ENCODE measurements at regions of chr19 and their contacts with region 1.

Region 1: GRCh38 chr19:11697284-11697855 is 41.4 kb downstream of the ZNF823 start:
- DNase-seq: no peak
- H3K4me3 ChIP-seq: no peak overlapping the region
- H3K27ac ChIP-seq: no peak overlapping the region
- H3K4me1 ChIP-seq: peaks cover 3 to 9% of the 10 kb centered on the region in 2 donors
- H3K27me3 ChIP-seq: no peaks in the 10 kb centered on the region
- CTCF ChIP-seq: no peak
- POLR2A ChIP-seq: no peak

Region 2: GRCh38 chr19:11738746-11739620 is 41.6 kb after region 1 on chr19 and contains the start of gene ZNF823:
- intact Hi-C with region 1: loop called (anchors 2 kb)
- DNase-seq: peak; percentile 100
- H3K4me3 ChIP-seq: peak within 1 kb of the TSS; percentile 56 to 97 (median 66)
- H3K27ac ChIP-seq: peak within 1 kb of the TSS; percentile 91 to 97 (median 93)
- H3K4me1 ChIP-seq: peaks cover 8 to 18% of the 10 kb centered on the region in 2 donors
- H3K27me3 ChIP-seq: no peaks in the 10 kb centered on the region
- CTCF ChIP-seq: no peak
- POLR2A ChIP-seq: peak in 1 of 2 donors; percentile 91
- total RNA-seq, gene ZNF823: 7.4 to 11.7 (median 9.1) TPM

Measured in thyroid gland (tissue), 4 donors.